ENCODE measurements at regions of chr19 and their contacts with region 1.

Region 1: DNA sequence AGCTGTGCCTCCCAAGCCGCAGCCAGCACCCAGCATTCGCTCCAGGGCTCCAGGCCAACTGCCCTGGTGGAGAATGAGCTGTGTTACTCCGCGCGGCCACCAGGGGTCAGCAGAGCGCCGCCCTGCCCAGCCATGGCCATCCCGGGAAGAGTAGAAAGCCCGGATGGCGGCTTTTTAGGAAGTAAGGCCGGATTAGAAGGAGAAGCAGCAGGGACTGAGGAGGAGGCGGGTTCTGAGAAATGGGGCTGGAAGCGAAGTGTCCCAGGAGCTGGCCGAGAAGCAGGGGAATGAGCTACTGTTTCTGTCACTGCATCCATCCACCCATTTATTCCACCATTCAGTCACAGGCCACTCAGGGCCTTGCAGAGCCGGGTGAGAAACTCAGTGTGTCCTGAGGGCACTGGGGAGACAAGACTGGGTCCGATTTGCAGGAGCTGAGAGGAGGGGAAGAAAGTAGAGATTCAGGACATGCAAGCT is 6.6 kb upstream of the NPAS1 start:
- DNase-seq: peak; percentile 65 to 88
- H3K4me3 ChIP-seq: peak overlapping the region; percentile 7; the same call in 1 of the 2 replicates
- H3K27ac ChIP-seq: no peak overlapping the region
- H3K4me1 ChIP-seq: peaks cover 6% of the 10 kb centered on the region
- H3K27me3 ChIP-seq: no peaks in the 10 kb centered on the region
- CTCF ChIP-seq: peak; percentile 99

Region 2: GRCh38 chr19:46303691-46304397 is 709.2 kb before region 1 on chr19:
- CTCF ChIA-PET with region 1: no interaction called
- POLR2A ChIA-PET with region 1: no interaction called
- intact Hi-C with region 1: no loop called
- DNase-seq: peak; percentile 82 to 95
- H3K4me3 ChIP-seq: peak overlapping the region; percentile 54
- H3K27ac ChIP-seq: peak overlapping the region; percentile 62
- H3K4me1 ChIP-seq: peaks cover 22% of the 10 kb centered on the region
- H3K27me3 ChIP-seq: no peaks in the 10 kb centered on the region
- CTCF ChIP-seq: no peak

Region 3: DNA sequence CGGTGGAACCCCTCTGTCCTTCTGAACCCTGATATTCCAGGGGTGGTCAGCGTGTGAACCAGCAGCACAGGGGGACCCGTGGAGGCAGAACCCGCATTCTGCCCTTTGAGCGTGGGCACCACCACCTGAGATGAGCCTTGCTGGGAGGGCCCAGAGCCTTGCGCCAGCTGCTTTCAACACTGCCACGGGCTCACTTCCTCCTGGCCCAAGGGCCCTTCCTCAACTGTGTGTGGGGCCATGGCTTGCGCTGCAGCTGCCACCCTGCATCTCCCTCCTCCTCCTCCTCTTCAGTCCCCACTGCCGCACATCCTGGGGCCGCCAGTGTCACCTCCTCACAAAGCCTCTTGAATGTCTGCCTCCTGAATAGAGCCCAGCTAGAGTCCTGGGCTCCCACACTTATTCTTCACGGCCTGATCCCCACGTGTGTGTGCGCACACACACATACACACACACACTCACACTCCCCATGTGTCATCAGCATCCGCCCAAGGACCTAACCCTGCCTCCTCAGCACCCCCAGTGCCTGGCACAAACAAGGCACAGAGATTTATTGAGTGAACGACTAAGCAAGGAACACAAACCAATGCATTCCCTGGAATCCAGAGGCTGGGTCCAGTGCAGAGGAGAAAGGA is 62.2 kb after region 1 on chr19:
- CTCF ChIA-PET with region 1: no interaction called
- POLR2A ChIA-PET with region 1: no interaction called
- intact Hi-C with region 1: loop called (anchors 1 kb)
- DNase-seq: no peak
- H3K4me3 ChIP-seq: no peak overlapping the region
- H3K27ac ChIP-seq: no peak overlapping the region
- H3K4me1 ChIP-seq: peaks cover 5% of the 10 kb centered on the region
- H3K27me3 ChIP-seq: no peaks in the 10 kb centered on the region
- CTCF ChIP-seq: no peak

Region 4: DNA sequence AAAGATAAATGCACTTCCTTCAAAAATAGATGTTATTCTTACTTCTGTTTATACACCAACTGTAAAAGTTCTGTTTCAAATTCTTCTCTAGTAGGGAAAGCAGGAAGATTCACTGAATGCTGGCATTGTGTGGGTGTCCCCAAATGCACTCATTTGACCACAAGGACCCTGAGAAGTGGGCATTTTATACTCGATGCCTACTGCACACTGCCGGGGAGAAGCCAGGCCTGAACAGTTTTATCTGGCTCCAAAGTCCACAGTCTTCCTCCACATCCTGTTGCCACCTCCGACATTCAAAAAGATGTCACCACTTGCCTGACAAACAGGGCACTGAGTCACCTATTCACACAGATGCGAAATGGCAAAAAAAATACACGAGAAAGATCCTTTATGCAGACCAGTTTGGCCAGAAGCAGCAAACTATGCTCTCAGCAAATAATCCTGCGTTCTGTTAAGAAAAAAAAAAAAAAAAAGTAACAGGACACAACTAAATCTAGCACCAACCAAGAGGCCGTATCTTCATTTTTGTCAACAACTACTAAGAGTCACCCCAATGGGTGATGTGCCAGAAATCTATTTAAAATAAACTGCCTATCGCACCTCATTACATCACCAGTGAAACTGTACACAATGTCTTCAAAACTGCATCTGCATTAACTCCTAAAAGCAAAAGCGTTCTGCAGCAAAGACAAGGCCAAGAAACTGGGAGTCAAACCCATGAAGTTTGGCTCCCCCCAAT is 94.3 kb after region 1 on chr19:
- CTCF ChIA-PET with region 1: no interaction called
- POLR2A ChIA-PET with region 1: no interaction called
- intact Hi-C with region 1: no loop called
- DNase-seq: peak; percentile 57 to 94
- H3K4me3 ChIP-seq: peak overlapping the region; percentile 10; the same call in 1 of the 2 replicates
- H3K27ac ChIP-seq: peak overlapping the region; percentile 62
- H3K4me1 ChIP-seq: peaks cover 43% of the 10 kb centered on the region
- H3K27me3 ChIP-seq: no peaks in the 10 kb centered on the region
- CTCF ChIP-seq: no peak

Region 5: DNA sequence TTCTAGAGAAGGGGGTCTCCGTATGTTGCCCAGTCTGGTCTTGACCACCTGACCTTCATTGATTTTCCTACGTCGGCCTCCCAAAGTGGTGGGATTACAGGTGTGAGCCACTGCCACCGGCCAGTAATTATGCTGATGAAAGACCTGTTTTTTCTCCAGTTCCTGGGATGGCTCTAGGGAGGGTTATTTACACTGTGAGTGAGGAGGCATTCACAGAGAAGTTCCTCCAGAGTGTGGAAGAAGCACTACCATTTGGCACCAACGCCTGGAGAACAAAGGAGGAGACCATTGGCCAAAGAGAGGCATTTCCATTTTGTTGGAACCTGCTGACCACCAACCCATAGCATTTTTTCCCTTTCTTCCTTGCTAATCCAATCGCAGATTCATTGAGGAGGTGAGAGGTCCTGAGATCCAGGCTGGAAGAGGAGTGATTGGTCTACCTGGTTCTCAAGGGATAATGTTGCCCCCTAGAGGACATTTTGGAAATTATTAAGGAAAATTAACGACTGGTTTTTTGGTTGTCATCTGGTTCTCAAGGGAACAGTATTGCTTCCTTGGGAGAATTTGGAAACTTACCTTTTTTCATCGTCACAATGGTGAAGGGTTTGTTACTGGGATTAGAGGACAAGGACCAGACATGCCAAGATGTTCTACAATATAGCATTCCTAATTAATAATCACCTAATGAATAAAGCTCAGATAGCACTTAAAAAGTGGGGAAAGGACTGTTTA is 112.0 kb after region 1 on chr19:
- CTCF ChIA-PET with region 1: interaction called, 9 read pairs
- POLR2A ChIA-PET with region 1: no interaction called
- intact Hi-C with region 1: loop called (anchors 1 kb)
- DNase-seq: peak; percentile 39 to 75
- H3K4me3 ChIP-seq: no peak overlapping the region
- H3K27ac ChIP-seq: peak overlapping the region; percentile 65
- H3K4me1 ChIP-seq: peaks cover 40% of the 10 kb centered on the region
- H3K27me3 ChIP-seq: no peaks in the 10 kb centered on the region
- CTCF ChIP-seq: peak; percentile 96

Region 6: GRCh38 chr19:47243776-47244547 is 230.9 kb after region 1 on chr19:
- CTCF ChIA-PET with region 1: interaction called, 5 read pairs
- POLR2A ChIA-PET with region 1: no interaction called
- intact Hi-C with region 1: loop called (anchors 5 kb)
- DNase-seq: peak; percentile 86 to 95
- H3K4me3 ChIP-seq: peak overlapping the region; percentile 71
- H3K27ac ChIP-seq: peak overlapping the region; percentile 87
- H3K4me1 ChIP-seq: peaks cover 26% of the 10 kb centered on the region
- H3K27me3 ChIP-seq: no peaks in the 10 kb centered on the region
- CTCF ChIP-seq: peak; percentile 98

Region 7: GRCh38 chr19:47428177-47428894 is 415.3 kb after region 1 on chr19:
- CTCF ChIA-PET with region 1: no interaction called
- POLR2A ChIA-PET with region 1: no interaction called
- intact Hi-C with region 1: loop called (anchors 10 kb)
- DNase-seq: peak; percentile 88 to 92
- H3K4me3 ChIP-seq: peak overlapping the region; percentile 33; the same call in 1 of the 2 replicates
- H3K27ac ChIP-seq: 0 out of 2 replicates have a peak overlapping the region, but pooled peaks have one; percentile 19
- H3K4me1 ChIP-seq: peaks cover 22% of the 10 kb centered on the region
- H3K27me3 ChIP-seq: peaks cover 18% of the 10 kb centered on the region
- CTCF ChIP-seq: no peak

Measured in PC-9 (cell line).